SK-N-SH (cell line): ENCODE measurements at regions of chr11 and their contacts with region 1.

Region 1: GRCh38 chr11:554824-555472 is 5.6 kb downstream of the LMNTD2 start:
- DNase-seq: peak; percentile 92
- H3K4me3 ChIP-seq: peak overlapping the region in 1 of 2 experiments; percentile 53; a peak in 3 of 4 replicates
- H3K27ac ChIP-seq: no peak overlapping the region; a peak in 1 of 4 replicates
- H3K4me1 ChIP-seq: peaks cover under 1 to 22% of the 10 kb centered on the region in 2 experiments; a peak in 1 of 4 replicates
- H3K27me3 ChIP-seq: peaks cover 11% of the 10 kb centered on the region
- CTCF ChIP-seq: peak; percentile 43
- EP300 ChIP-seq: no peak
- RAD21 ChIP-seq: peak; percentile 63

Region 2: GRCh38 chr11:486189-486588 is 68.8 kb before region 1 on chr11:
- CTCF ChIA-PET with region 1: no interaction called
- POLR2A ChIA-PET with region 1: no interaction called
- DNase-seq: no peak
- H3K4me3 ChIP-seq: no peak overlapping the region
- H3K27ac ChIP-seq: no peak overlapping the region
- H3K4me1 ChIP-seq: no peaks in the 10 kb centered on the region
- H3K27me3 ChIP-seq: no peaks in the 10 kb centered on the region
- CTCF ChIP-seq: no peak
- EP300 ChIP-seq: no peak
- RAD21 ChIP-seq: no peak

Region 3: DNA sequence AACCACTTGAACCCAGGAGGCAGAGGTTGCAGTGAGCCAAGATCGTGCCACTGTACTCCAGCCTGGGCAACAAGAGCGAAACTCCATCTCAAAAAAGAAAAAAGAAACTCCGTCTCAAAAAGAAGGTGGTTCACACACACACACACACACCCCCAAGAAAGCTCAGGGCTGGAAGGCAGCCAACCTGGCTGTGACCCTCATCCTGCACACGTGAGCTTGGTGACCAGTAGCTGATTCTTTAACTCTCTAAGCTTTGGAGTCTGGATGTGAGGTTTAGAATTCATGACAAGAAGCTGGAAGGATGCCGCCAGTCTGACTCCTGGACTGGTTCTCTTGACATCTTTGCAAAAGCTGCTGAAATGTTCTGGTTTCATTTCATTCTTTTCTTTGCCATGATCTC is 46.0 kb before region 1 on chr11:
- CTCF ChIA-PET with region 1: no interaction called
- POLR2A ChIA-PET with region 1: no interaction called
- DNase-seq: no peak
- H3K4me3 ChIP-seq: no peak overlapping the region
- H3K27ac ChIP-seq: no peak overlapping the region
- H3K4me1 ChIP-seq: peaks cover 7 to 9% of the 10 kb centered on the region in 2 experiments; a peak in 2 of 4 replicates
- H3K27me3 ChIP-seq: no peaks in the 10 kb centered on the region
- CTCF ChIP-seq: no peak
- EP300 ChIP-seq: no peak
- RAD21 ChIP-seq: no peak

Region 4: DNA sequence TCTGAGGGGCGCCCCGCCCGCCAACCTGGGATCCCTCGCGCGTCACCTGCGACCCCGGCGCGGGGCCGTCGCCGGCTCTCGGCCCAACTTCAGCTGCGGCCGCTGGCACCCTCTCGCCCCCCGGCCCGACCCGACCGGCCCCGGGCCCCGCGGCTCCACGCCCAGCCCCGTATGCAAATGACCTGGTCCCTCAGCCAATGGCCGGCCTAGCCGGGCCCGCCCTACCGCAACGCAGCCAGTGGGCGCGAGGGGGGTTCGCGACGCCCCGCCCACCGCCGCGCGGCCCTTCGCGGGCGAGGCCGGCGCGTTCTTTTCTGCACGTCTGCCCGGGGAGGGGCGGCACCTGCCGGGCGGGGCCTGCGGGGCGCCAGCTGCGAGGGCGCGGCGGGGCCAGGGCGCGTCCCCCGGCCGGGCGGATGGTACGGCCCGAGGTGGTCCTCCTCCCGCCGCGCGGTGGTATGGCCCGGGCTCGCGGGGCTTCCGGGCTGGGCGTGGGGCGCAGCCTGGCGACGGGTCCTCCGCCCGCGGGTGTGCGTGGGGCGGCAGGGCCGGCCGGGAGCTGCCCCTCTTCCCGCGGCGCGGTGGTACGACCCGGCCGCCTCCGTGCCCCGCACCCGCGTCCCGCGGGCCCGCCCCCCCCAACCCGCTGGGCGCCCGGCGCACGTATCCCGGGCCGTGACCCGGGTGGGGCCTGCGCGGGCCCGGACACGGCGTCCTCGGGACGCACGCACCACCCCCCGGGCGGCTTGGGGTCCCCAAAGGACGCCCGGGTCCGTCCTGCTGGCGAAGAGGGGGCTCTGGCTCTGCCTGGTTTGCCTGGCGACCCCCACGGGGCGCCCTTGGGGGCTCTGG is 13.6 kb after region 1 on chr11:
- CTCF ChIA-PET with region 1: interaction called, 41 read pairs
- POLR2A ChIA-PET with region 1: interaction called, 6 read pairs
- DNase-seq: peak; percentile 98
- H3K4me3 ChIP-seq: peak overlapping the region; percentile 72 to 88
- H3K27ac ChIP-seq: peak overlapping the region in 1 of 2 experiments; percentile 76; a peak in 1 of 4 replicates
- H3K4me1 ChIP-seq: peaks cover 6 to 26% of the 10 kb centered on the region in 2 experiments; a peak in 2 of 4 replicates
- H3K27me3 ChIP-seq: no peaks in the 10 kb centered on the region
- CTCF ChIP-seq: no peak
- EP300 ChIP-seq: no peak; a peak in 1 of 4 replicates
- RAD21 ChIP-seq: no peak

Region 5: GRCh38 chr11:606257-606656 is 51.3 kb after region 1 on chr11:
- CTCF ChIA-PET with region 1: interaction called, 10 read pairs
- POLR2A ChIA-PET with region 1: no interaction called
- DNase-seq: peak; percentile 92
- H3K4me3 ChIP-seq: no peak overlapping the region
- H3K27ac ChIP-seq: peak overlapping the region; percentile 57 to 73; a peak in 2 of 4 replicates
- H3K4me1 ChIP-seq: peaks cover 4 to 14% of the 10 kb centered on the region in 2 experiments; a peak in 1 of 4 replicates
- H3K27me3 ChIP-seq: no peaks in the 10 kb centered on the region
- CTCF ChIP-seq: no peak
- EP300 ChIP-seq: no peak
- RAD21 ChIP-seq: no peak